Mucosa of descending colon (tissue), 3 donors: ENCODE measurements at regions of chr12 and their contacts with region 1.

Region 1: GRCh38 chr12:108722992-108723766 is 8.1 kb downstream of the CORO1C start:
- DNase-seq: no peak
- ATAC-seq: peak; percentile 15
- H3K4me3 ChIP-seq: no peak overlapping the region
- H3K4me1 ChIP-seq: peaks cover 14% of the 10 kb centered on the region
- CTCF ChIP-seq: no peak

Region 2: DNA sequence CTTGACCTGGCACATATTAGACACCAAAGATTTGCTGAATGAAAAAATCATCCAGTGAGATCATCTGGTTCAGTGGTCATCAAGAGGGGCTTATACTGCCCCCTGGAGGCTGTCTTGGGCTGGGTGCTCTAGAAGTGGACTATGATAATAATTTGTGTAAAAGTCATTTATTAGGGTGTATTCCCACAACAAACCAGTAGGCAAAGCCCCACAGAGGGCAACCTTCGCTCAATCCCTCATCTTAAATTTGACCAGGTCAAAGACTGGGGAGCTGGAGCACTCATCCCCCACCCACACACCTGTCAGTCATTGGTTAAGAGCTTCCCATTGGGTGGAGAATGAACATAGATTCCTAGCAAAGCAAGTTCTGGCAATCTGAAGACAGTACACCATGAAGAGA is 228.1 kb before region 1 on chr12:
- intact Hi-C with region 1: no loop called
- DNase-seq: peak in 1 of 3 donors; percentile 34
- ATAC-seq: no peak
- H3K4me3 ChIP-seq: no peak overlapping the region
- H3K4me1 ChIP-seq: no peaks in the 10 kb centered on the region
- CTCF ChIP-seq: no peak

Region 3: DNA sequence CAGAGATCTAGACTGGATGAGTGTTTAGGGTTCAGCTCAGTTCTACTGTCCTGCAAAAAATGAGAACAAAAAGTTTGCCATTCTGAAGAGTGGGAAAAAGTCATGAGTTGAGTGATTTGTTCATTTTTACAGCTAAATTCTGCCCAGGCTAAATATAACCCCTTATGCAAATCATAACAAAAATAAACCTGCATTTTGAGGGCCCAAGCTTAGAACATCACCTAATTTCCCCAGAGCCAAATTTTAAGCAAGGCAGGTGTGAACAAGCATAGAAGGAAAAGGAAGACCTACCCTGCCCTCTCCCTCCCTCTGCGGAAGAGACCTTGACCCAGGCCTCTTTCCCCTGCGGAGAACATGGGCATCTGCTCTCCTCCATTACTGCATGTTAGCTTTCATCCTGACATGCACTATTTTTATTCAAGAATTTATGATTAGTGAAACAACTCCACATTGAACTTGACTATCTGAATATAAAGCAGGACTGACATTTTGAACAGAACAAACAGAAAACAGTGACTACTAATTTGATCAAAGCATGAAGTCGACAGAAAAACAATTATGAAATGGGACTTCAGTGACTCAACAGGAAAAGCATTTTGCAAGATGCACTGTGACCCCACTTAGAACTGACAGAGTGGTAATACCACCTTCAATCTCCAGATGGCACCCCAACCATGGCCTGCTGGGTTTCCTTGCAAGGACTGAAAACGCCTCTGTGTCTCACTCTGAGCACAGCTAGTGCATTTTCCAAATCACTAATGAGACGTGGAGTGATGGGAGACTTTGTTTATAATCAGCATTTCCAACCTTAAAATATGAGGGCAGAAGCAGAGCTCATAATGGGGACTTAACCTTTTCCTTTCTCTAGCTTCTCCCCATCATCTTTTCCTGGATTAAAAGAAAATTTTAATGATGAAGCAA is 58.6 kb before region 1 on chr12:
- intact Hi-C with region 1: loop called in 1 of 2 experiments (anchors 10 kb)
- DNase-seq: peak; percentile 66 to 94 (median 67)
- ATAC-seq: peak; percentile 98
- H3K4me3 ChIP-seq: no peak overlapping the region
- H3K4me1 ChIP-seq: peaks cover 3% of the 10 kb centered on the region
- CTCF ChIP-seq: peak; percentile 79